ENCODE measurements at regions of chr20 and their contacts with region 1.

Region 1: DNA sequence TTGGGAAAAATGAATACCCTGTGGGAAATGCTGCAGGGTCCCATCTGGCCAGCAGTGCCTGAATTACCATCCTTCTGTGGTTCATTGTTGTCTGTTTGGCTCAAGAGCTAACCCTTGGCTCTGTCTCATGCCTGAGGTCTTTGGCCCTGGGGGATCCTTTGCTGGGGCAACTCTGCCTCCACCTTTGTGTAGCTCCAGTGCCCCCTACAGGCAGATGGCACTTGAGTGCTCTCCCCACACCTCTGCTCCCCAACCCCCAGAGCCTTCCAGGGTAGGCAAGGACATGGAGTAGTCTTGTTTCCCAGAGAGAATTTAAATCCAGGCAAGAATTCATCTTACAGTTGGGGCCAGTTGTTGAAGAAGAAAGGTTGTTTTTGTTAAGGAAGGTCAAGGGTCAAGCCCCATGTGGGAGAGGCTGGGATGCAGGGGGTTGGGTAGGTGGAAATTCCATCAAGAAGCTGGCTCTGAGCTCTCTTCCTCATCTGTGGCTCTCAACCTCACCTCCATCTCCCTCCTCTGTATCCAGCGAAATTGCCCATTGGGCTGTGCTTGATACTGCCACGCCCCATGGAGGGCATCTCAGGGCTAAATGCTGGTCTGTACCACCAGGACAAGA is 44.2 kb downstream of the ZNF831 start:
- DNase-seq: peak; percentile 48 to 61
- ATAC-seq: peak; percentile 82 to 88 (median 83)
- H3K4me3 ChIP-seq: no peak overlapping the region
- H3K27ac ChIP-seq: no peak overlapping the region
- H3K4me1 ChIP-seq: peaks cover 0 to 36% (median 6%) of the 10 kb centered on the region in 9 donors
- H3K27me3 ChIP-seq: peaks cover 0 to 40% (median 0%) of the 10 kb centered on the region in 7 donors
- CTCF ChIP-seq: peak; percentile 26 to 74 (median 64)

Region 2: GRCh38 chr20:59087829-59088433 is 119.9 kb before region 1 on chr20:
- intact Hi-C with region 1: loop called in 6 of 10 experiments (anchors 1 to 5 kb)
- DNase-seq: peak; percentile 81 to 84
- ATAC-seq: peak in 6 of 8 donors; percentile 74 to 88 (median 86)
- H3K4me3 ChIP-seq: no peak overlapping the region
- H3K27ac ChIP-seq: no peak overlapping the region
- H3K4me1 ChIP-seq: peaks cover 0 to 17% (median 0%) of the 10 kb centered on the region in 9 donors
- H3K27me3 ChIP-seq: peaks cover 0 to 9% (median 0%) of the 10 kb centered on the region in 7 donors
- CTCF ChIP-seq: peak; percentile 80 to 97 (median 94)

Region 3: GRCh38 chr20:59094576-59094975 is 113.3 kb before region 1 on chr20:
- intact Hi-C with region 1: loop called in 5 of 10 experiments (anchors 5 kb)
- DNase-seq: no peak
- ATAC-seq: no peak
- H3K4me3 ChIP-seq: no peak overlapping the region
- H3K27ac ChIP-seq: no peak overlapping the region
- H3K4me1 ChIP-seq: no peaks in the 10 kb centered on the region
- H3K27me3 ChIP-seq: peaks cover 0 to under 1% (median 0%) of the 10 kb centered on the region in 7 donors
- CTCF ChIP-seq: no peak

Region 4: DNA sequence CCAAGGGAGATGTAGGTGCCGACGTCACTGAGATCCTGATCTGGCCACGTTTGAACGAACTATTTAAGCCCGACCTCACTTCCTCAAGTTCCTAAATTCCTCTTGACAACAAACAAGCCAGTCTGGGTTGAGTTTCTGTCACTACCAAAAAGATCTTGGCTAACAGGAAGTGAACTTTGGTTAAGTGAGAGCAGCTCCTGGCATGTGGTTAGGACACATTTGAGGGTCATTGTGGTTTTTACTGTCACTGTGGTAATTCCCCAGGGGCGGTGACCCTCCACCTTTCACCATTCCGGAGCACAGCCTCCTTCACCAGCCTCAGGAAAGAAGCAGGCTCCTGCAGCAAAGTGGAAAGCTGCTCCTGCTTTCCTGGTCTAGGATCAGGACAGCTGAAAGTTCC is 87.4 kb before region 1 on chr20:
- intact Hi-C with region 1: no loop called
- DNase-seq: no peak
- ATAC-seq: no peak
- H3K4me3 ChIP-seq: no peak overlapping the region
- H3K27ac ChIP-seq: no peak overlapping the region
- H3K4me1 ChIP-seq: peaks cover 0 to 16% (median 0%) of the 10 kb centered on the region in 9 donors
- H3K27me3 ChIP-seq: peaks cover 0 to 21% (median 0%) of the 10 kb centered on the region in 7 donors
- CTCF ChIP-seq: no peak

Region 5: GRCh38 chr20:59273739-59274357 is 66.0 kb after region 1 on chr20:
- intact Hi-C with region 1: no loop called
- DNase-seq: no peak
- ATAC-seq: no peak
- H3K4me3 ChIP-seq: no peak overlapping the region
- H3K27ac ChIP-seq: no peak overlapping the region
- H3K4me1 ChIP-seq: no peaks in the 10 kb centered on the region
- H3K27me3 ChIP-seq: peaks cover 0 to 82% (median 53%) of the 10 kb centered on the region in 7 donors
- CTCF ChIP-seq: no peak

Measured in heart right ventricle (tissue), 16 donors.